GM23248 (cell line): ENCODE measurements at regions of chr1 and their contacts with region 1.

Region 1: GRCh38 chr1:241998412-241998921 is 431 bp downstream of the MAP1LC3C start:
- DNase-seq: peak; percentile 88
- H3K4me3 ChIP-seq: peak overlapping the region; percentile 62
- H3K27ac ChIP-seq: no peak overlapping the region
- H3K4me1 ChIP-seq: peaks cover 16% of the 10 kb centered on the region; the same call in 1 of the 2 replicates
- H3K27me3 ChIP-seq: no peaks in the 10 kb centered on the region

Region 2: GRCh38 chr1:241611063-241611462 is 387.4 kb before region 1 on chr1:
- in situ Hi-C with region 1: loop called (anchors 25 kb)
- DNase-seq: peak; percentile 69
- H3K4me3 ChIP-seq: no peak overlapping the region
- H3K27ac ChIP-seq: no peak overlapping the region
- H3K4me1 ChIP-seq: peaks cover 20% of the 10 kb centered on the region
- H3K27me3 ChIP-seq: no peaks in the 10 kb centered on the region

Region 3: GRCh38 chr1:241895013-241895412 is 103.5 kb before region 1 on chr1:
- in situ Hi-C with region 1: loop called (anchors 10 kb)
- DNase-seq: no peak
- H3K4me3 ChIP-seq: no peak overlapping the region
- H3K27ac ChIP-seq: no peak overlapping the region
- H3K4me1 ChIP-seq: no peaks in the 10 kb centered on the region
- H3K27me3 ChIP-seq: no peaks in the 10 kb centered on the region

Region 4: GRCh38 chr1:242579528-242580235 is 581.2 kb after region 1 on chr1:
- in situ Hi-C with region 1: no loop called
- DNase-seq: no peak
- H3K4me3 ChIP-seq: no peak overlapping the region
- H3K27ac ChIP-seq: no peak overlapping the region
- H3K4me1 ChIP-seq: no peaks in the 10 kb centered on the region
- H3K27me3 ChIP-seq: no peaks in the 10 kb centered on the region